ENCODE measurements at regions of chr6 and their contacts with region 1.

Region 1: DNA sequence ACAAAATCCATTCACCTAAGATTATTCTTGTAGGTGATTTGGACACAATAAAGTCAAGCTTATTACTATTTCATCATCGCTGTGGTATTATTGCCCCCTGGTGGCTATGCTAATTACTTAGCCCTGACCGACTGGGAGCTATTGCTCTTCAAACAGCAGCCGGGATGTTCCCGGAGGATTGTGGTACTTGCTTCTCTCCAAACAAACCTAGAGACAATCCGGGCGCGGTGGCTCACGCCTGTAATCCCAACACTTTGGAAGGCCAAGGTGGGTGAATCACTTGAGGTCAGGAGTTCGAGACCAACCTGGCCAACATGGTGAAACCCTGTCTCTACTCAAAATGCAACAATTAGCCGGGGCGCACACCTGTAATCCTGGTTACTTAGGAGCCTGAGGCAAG is 15.4 kb upstream of the STMND1 start:
- DNase-seq: peak; percentile 79
- H3K4me3 ChIP-seq: no peak overlapping the region
- H3K27ac ChIP-seq: no peak overlapping the region
- H3K4me1 ChIP-seq: peaks cover 12% of the 10 kb centered on the region
- H3K27me3 ChIP-seq: no peaks in the 10 kb centered on the region
- CTCF ChIP-seq: peak; percentile 72

Region 2: GRCh38 chr6:16514249-16514648 is 572.2 kb before region 1 on chr6:
- CTCF ChIA-PET with region 1: interaction called, 9 read pairs
- POLR2A ChIA-PET with region 1: no interaction called
- intact Hi-C with region 1: loop called (anchors 10 kb)
- DNase-seq: peak; percentile 81
- H3K4me3 ChIP-seq: no peak overlapping the region
- H3K27ac ChIP-seq: no peak overlapping the region
- H3K4me1 ChIP-seq: no peaks in the 10 kb centered on the region
- H3K27me3 ChIP-seq: no peaks in the 10 kb centered on the region
- CTCF ChIP-seq: peak; percentile 67

Region 3: DNA sequence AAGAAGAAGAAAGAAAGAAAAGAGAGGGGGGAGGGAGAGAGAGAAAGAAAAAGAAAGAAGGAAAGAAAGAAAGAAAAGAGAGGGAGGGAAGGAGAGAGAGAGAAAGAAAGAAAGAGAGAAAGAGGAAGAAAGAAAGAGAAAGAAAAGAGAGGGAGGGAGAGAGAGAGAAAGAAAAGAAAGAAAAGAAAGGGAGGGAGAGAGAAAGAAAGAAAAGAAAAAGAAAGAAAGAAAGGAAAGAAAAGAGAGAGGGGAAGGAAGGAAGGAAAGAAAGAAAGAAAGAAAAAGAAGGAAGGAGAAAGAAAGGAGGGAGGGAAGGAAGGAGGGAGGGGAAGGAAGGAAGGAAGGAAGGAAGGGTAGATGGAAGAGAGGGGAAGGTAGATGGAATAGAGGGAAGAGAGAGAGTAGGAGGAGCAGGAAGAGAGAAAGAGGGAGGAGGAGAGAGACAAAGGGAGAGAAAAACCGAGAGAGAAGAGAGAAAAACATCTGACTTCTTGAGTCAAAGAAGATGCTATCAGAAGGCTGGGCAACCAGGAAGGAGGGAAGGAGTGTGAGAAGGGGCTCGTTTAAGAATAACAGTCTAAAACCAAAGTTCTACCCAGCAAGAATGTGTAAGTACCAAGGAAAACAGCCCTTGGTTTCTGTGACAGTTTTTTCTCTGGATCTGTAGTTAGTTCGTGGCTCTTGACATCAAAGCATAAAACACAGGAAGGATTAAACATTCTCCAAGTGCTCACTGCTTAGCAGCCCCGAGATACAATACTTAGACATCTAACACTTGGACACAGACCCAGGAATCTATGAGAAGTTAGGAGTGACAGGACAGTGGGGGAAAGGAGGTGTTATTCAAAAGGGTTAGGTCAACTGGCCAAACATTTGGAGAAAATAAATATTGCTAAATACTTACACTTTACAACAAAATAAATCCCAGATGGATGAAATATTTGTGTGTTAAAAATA is 116.5 kb before region 1 on chr6:
- CTCF ChIA-PET with region 1: no interaction called
- POLR2A ChIA-PET with region 1: no interaction called
- intact Hi-C with region 1: loop called (anchors 5 kb)
- DNase-seq: peak; percentile 73
- H3K4me3 ChIP-seq: peak overlapping the region; percentile 20
- H3K27ac ChIP-seq: peak overlapping the region; percentile 58
- H3K4me1 ChIP-seq: peaks cover 35% of the 10 kb centered on the region
- H3K27me3 ChIP-seq: no peaks in the 10 kb centered on the region
- CTCF ChIP-seq: no peak

Measured in A673 (cell line).